Activated CD8-positive, alpha-beta T cell treated with anti-CD3 and anti-CD28 coated beads, Interleukin-2, amount 10 ng/mL, durations not matched to agents 7 days and 5 days (primary cell): ENCODE measurements at regions of chr17 and their contacts with region 1.

Region 1: GRCh38 chr17:48816774-48817590 is at the start of gene TTLL6:
- DNase-seq: peak; percentile 88
- ATAC-seq: peak; percentile 98
- H3K4me3 Mint-ChIP-seq: peak within 1 kb of the TSS; percentile 75
- H3K27ac Mint-ChIP-seq: peak within 1 kb of the TSS; percentile 52
- H3K4me1 Mint-ChIP-seq: peaks cover 19% of the 10 kb centered on the region
- H3K27me3 Mint-ChIP-seq: peaks cover 52% of the 10 kb centered on the region
- total RNA-seq, gene TTLL6: not detected

Region 2: DNA sequence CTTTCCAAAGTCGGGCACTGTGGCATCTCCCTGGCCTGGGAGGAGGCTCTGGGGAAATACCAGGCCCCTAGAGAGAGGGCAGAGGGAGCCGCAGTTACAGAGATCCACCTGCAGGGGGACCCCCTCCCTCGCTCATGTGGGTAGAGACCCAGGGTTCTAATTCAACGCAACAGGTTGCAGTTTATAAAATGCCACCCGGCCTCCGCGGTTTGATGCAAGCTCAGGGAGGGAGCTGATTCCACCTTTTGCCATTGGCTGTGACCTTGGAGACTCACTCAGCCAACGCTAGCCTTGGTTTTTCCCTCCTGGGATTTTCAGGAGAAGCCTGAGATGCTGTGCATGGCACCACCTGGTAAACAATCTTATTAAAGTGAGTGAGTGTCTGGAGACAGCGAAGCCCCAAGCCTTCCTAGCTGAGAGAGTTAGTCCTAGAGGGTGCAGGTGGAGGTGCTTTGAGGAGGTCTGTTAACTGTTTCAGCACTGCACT is 12.0 kb before region 1 on chr17:
- CTCF ChIA-PET with region 1: interaction called, 25 read pairs
- POLR2A ChIA-PET with region 1: no interaction called
- DNase-seq: peak; percentile 78
- ATAC-seq: peak; percentile 94
- H3K4me3 Mint-ChIP-seq: no peak overlapping the region
- H3K27ac Mint-ChIP-seq: no peak overlapping the region
- H3K4me1 Mint-ChIP-seq: no peaks in the 10 kb centered on the region
- H3K27me3 Mint-ChIP-seq: peaks cover 18% of the 10 kb centered on the region

Region 3: DNA sequence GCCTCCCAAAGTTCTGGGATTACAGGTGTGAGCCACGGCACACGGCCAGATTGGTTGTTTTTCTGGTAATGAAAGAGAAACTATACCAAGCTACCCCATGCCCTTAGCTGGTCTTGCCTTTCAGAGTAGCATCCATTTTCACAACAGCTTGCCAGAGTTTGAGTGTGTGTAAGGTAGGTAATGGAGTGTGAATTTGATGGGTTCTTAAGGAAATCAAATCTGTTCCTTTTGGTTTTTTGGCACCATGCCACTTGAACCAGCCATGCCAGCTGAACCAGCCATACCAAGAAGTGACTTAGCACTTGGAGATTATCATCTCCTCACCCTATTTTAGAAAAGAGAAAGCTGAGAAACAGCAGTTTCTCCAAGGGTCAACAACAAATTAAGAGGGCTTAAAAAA is 19.0 kb after region 1 on chr17:
- CTCF ChIA-PET with region 1: interaction called, 17 read pairs
- POLR2A ChIA-PET with region 1: interaction called, 4 read pairs
- DNase-seq: no peak
- ATAC-seq: no peak
- H3K4me3 Mint-ChIP-seq: no peak overlapping the region
- H3K27ac Mint-ChIP-seq: peak overlapping the region; percentile 1
- H3K4me1 Mint-ChIP-seq: peaks cover 93% of the 10 kb centered on the region
- H3K27me3 Mint-ChIP-seq: no peaks in the 10 kb centered on the region

Region 4: DNA sequence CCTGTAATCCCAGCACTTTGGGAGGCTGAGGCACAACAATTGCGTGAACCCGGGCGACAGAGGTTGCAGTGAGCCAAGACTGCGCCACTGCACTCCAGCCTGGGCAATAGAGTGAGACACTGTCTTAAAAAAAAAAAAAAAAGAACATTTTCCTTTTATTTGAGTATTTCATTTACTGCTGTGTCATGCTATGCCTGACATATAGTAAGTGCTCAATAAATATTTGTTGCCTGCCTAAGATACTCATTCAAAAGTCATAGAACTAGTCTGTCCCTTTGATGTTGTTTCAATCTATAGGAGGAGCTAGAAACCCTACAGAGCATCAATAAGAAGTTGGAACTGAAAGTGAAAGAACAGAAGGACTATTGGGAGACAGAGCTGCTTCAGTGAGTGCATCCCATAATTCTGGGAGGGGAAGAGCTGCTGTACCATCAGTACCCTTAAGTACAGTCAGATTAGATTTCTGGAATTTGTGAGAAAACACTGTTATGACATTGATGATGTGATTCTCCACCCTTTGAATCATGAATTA is 33.9 kb after region 1 on chr17:
- CTCF ChIA-PET with region 1: interaction called, 10 read pairs
- POLR2A ChIA-PET with region 1: no interaction called
- DNase-seq: no peak
- ATAC-seq: peak; percentile 89
- H3K4me3 Mint-ChIP-seq: no peak overlapping the region
- H3K27ac Mint-ChIP-seq: peak overlapping the region; percentile 9
- H3K4me1 Mint-ChIP-seq: peaks cover 13% of the 10 kb centered on the region
- H3K27me3 Mint-ChIP-seq: no peaks in the 10 kb centered on the region

Region 5: DNA sequence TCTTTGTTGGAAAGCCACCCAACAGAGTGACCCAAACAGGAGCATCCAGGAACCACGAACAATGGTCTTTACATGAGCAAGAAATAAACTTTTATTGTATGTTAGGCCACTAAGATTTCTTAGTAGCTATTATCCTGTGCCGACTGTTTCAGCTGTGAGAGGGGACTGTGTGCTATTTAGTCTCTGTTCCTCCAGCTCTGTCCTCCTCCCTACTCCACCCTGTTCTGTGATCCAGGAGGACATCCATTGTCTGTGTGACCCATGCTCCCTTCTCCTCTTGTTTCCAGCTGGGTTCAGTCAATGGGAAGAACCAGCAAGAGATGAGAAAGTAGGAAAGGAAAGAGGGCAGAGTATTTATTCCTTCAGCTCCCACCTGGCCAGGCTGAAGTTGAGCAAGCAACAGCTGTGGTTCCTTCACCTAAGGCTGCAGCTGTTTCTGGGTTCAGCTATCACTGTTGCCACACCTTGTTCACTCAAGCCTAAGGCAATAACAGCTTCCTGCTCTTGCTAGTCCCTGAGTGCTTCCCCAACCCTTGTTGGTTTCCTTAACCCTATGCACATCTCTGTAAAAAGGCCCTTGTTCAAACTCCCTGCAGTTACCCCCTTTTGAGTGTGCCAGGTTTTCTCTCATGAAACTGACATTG is 300.7 kb after region 1 on chr17:
- CTCF ChIA-PET with region 1: no interaction called
- POLR2A ChIA-PET with region 1: no interaction called
- DNase-seq: no peak
- ATAC-seq: no peak
- H3K4me3 Mint-ChIP-seq: no peak overlapping the region
- H3K27ac Mint-ChIP-seq: no peak overlapping the region
- H3K4me1 Mint-ChIP-seq: no peaks in the 10 kb centered on the region
- H3K27me3 Mint-ChIP-seq: peaks cover 53% of the 10 kb centered on the region